ENCODE measurements at regions of chr6 and their contacts with region 1.

Region 1: GRCh38 chr6:156686995-156687788 is 90.0 kb upstream of the ARID1B start:
- DNase-seq: peak; percentile 84 to 90
- ATAC-seq: peak; percentile 81 to 84
- H3K4me3 ChIP-seq: peak overlapping the region; percentile 71 to 91 (median 86)
- H3K27ac ChIP-seq: peak overlapping the region; percentile 96 to 99 (median 99)
- H3K4me1 ChIP-seq: peaks cover 7 to 13% of the 10 kb centered on the region in 2 donors
- H3K27me3 ChIP-seq: no peaks in the 10 kb centered on the region
- CTCF ChIP-seq: peak in 1 of 5 experiments; percentile 10
- POLR2A ChIP-seq: peak; percentile 75 to 85

Region 2: DNA sequence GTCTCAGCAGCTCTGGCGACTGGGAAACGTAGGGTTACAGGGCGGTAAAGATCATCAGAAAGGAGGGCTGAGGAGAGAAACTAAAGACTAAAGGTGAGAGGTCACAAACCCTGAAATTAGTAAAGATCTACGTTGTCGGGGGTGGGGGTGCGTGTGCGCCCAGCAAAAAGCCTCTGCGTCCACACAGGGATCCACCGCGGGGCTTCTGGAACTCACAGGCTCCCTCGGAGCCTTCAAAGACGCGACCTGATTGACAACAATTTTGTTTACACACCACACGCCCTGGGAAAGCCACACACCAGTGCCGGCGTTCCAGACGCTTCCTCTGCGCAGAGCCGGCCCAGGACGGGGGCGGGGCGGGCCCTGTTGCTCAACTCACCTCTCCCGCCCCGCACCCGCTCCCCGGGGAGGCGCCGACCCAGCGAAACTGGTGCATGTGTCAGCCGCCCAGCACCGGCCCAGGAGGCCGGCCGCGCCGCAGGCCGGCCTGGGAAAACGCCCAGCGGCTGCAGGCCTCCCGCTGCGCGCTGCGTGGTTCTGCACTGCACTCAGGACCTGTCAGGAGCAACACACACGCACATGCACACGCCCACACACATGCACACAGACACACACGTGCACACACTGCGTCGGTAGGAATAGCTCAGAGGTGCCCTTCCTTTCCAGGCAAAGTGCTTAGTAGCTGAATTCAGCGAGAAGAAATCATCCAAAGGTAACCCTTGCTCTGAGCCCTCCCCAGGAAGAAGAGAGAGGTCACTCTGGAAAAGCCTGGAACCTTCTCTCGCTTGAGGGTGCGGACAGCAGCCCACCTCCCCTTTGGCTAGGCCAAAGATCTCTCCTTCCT is 32.8 kb after region 1 on chr6:
- in situ Hi-C with region 1: no loop called
- intact Hi-C with region 1: loop called (anchors 1 kb)
- DNase-seq: peak; percentile 90 to 93
- ATAC-seq: peak; percentile 82 to 88
- H3K4me3 ChIP-seq: peak overlapping the region; percentile 34 to 52 (median 46)
- H3K27ac ChIP-seq: peak overlapping the region; percentile 89 to 96 (median 96)
- H3K4me1 ChIP-seq: peaks cover 21 to 27% of the 10 kb centered on the region in 2 donors
- H3K27me3 ChIP-seq: no peaks in the 10 kb centered on the region
- CTCF ChIP-seq: no peak
- POLR2A ChIP-seq: peak; percentile 53 to 79

Region 3: GRCh38 chr6:156767603-156768467 is 80.6 kb after region 1 on chr6:
- in situ Hi-C with region 1: loop called in 2 of 4 experiments (anchors 10 kb)
- intact Hi-C with region 1: no loop called
- DNase-seq: no peak
- ATAC-seq: no peak
- H3K4me3 ChIP-seq: no peak overlapping the region
- H3K27ac ChIP-seq: no peak overlapping the region
- H3K4me1 ChIP-seq: no peaks in the 10 kb centered on the region
- H3K27me3 ChIP-seq: no peaks in the 10 kb centered on the region
- CTCF ChIP-seq: no peak
- POLR2A ChIP-seq: no peak

Region 4: GRCh38 chr6:156852132-156852857 is 165.1 kb after region 1 on chr6:
- in situ Hi-C with region 1: no loop called
- intact Hi-C with region 1: loop called (anchors 10 kb)
- DNase-seq: peak in 1 of 2 donors; percentile 43
- ATAC-seq: peak; percentile 31 to 39
- H3K4me3 ChIP-seq: no peak overlapping the region
- H3K27ac ChIP-seq: peak overlapping the region; percentile 79 to 87 (median 84)
- H3K4me1 ChIP-seq: peaks cover 80 to 94% of the 10 kb centered on the region in 2 donors
- H3K27me3 ChIP-seq: no peaks in the 10 kb centered on the region
- CTCF ChIP-seq: no peak
- POLR2A ChIP-seq: no peak

Region 5: DNA sequence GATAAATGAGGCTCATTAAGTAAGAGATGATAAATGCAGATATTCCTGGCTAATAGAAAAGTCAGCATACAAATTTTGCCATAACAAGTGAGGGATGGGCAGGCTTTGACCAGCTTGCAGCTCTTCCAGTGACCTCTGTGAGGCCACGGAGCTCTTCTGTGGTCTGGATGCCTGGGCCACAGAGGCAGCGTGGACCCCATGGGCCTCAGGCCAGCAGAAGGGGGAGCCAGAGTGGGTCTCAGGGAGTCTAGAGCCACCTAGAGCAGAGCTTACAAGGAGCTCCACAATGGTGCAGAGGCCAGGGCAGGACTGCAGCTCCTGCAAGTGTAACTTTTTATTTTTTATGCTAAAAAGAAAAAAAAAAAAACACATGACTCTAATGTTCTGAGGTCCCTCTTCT is 255.1 kb after region 1 on chr6:
- in situ Hi-C with region 1: no loop called
- intact Hi-C with region 1: loop called (anchors 5 kb)
- DNase-seq: no peak
- ATAC-seq: no peak
- H3K4me3 ChIP-seq: no peak overlapping the region
- H3K27ac ChIP-seq: peak overlapping the region in 2 of 4 donors; percentile 7 to 58
- H3K4me1 ChIP-seq: peaks cover 67 to 80% of the 10 kb centered on the region in 2 donors
- H3K27me3 ChIP-seq: no peaks in the 10 kb centered on the region
- CTCF ChIP-seq: no peak
- POLR2A ChIP-seq: no peak

Region 6: DNA sequence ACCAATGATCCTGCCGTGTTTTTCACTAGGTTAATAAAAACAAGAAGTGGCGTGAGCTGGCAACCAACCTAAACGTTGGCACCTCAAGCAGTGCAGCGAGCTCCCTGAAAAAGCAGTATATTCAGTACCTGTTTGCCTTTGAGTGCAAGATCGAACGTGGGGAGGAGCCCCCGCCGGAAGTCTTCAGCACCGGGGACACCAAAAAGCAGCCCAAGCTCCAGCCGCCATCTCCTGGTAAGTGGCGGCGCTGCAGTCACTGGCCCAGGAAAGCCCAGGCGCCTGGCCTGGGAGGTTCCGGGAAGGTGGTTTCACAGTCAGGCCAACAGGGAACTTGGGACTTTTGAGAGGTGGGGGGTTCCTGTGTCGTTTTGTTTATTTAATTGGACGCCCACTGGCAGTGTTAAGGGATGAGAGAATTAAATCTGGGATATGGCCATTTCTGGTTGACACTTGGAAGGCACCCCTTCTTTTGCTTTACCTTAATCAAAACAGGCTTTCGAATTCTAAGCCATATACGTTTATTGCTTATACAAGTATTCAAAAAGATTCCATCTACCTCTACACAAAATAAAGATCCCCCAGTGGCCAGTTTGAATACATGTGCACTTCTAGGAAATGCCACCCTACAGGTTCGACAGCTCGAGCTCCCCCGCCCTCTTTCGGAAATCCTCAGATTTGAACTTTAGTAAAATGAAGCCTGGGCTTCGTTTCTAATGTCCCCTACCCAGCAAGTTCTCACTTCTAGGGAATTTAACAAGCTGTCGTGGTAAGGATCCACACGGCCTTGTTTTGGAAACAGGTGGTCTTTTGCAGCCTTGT is 497.2 kb after region 1 on chr6:
- in situ Hi-C with region 1: no loop called
- intact Hi-C with region 1: loop called (anchors 5 kb)
- DNase-seq: peak; percentile 41 to 65
- ATAC-seq: peak; percentile 22 to 40
- H3K4me3 ChIP-seq: no peak overlapping the region
- H3K27ac ChIP-seq: peak overlapping the region in 3 of 4 donors; percentile 9 to 46 (median 24)
- H3K4me1 ChIP-seq: peaks cover 26 to 27% of the 10 kb centered on the region in 2 donors
- H3K27me3 ChIP-seq: no peaks in the 10 kb centered on the region
- CTCF ChIP-seq: peak; percentile 83 to 92 (median 90)
- POLR2A ChIP-seq: no peak